ENCODE measurements at regions of chrX and their contacts with region 1.

Region 1: DNA sequence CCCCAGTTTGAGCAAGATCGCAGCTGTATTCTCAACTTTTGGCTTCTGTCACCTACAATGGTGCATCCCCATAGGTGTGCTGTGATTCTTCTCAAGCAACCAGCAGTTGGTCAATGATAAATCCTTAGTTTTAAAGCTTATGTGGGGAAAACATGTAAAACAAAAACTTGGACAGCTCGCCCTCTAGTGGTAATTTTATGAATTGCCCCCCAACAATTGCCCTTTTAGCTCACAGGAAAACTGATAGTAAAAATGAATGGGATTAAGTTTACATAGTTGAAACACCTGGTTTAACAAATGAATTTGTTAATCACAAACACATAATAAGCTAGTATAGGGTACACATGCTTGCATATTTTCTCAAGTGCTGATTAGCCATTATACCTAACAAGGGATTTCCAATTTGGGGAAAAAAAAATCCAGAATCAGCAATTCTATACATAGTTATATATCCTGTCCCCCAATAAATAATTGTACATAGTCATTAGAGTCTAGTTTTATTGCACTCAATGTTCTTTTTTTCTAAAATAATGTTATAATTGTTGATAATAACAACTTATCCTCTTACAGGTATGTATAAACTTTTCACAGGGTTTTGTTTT is 30.1 kb downstream of the TEX13A start:
- DNase-seq: peak; percentile 57
- H3K4me3 Mint-ChIP-seq: no peak overlapping the region
- H3K27ac Mint-ChIP-seq: no peak overlapping the region
- H3K4me1 Mint-ChIP-seq: no peaks in the 10 kb centered on the region
- H3K27me3 Mint-ChIP-seq: peaks cover 39% of the 10 kb centered on the region
- CTCF ChIP-seq: peak; percentile 74

Region 2: DNA sequence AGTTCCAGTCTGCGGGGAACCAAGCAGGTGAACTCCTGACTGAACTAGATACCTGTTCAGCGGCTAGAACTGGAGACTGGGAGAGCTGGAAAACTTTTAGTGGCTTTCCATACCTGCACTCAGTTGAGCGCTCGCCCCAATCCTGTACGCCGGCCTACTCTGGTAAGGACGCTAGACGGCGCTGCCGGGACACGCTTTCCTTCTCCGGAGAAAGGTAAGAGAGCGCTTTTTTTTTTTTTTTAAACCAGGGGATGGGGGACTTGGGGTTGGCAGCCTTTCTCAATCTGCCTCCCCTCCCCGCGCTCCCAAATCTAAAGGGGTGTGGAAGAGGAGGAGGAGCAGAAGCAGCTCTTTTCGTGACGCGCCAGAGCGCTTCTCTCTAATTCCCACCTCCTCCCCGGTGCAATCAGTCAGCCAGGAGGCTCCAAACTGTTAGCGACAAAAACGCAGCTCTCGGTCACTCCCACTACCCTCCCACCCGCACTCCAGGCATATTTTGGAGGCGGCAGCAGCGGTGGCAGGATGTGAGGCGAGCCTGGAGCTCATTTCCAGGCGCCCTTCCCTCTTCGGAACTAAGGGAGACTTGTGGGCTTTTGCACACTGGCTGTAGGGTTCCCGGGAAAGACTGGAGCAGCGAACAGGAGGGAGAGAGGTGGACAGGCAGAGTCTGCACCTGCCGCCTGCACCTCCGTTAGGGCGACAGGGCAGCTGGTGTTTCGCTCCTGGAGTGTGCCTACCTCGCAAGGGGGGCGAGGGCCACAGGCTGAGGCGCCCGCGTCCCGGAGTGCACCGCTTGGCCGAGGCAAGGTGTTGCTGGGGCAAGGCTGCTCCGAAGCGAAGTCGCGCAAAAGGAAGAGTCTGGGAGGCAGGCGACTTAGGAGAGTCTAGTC is 624.3 kb before region 1 on chrX and contains the start of gene IL1RAPL2:
- CTCF ChIA-PET with region 1: interaction called, 17 read pairs
- POLR2A ChIA-PET with region 1: interaction called, 3 read pairs
- intact Hi-C with region 1: loop called (anchors 2 kb)
- DNase-seq: peak; percentile 57
- H3K4me3 Mint-ChIP-seq: peak within 1 kb of the TSS; percentile 74
- H3K27ac Mint-ChIP-seq: no peak within 1 kb of the TSS
- H3K4me1 Mint-ChIP-seq: no peaks in the 10 kb centered on the region
- H3K27me3 Mint-ChIP-seq: peaks cover 36% of the 10 kb centered on the region
- CTCF ChIP-seq: peak; percentile 57
- total RNA-seq, gene IL1RAPL2: 3.2 and 4.4 TPM in 2 replicates

Region 3: GRCh38 chrX:104922206-104922621 is 268.1 kb before region 1 on chrX:
- CTCF ChIA-PET with region 1: interaction called, 21 read pairs
- POLR2A ChIA-PET with region 1: no interaction called
- intact Hi-C with region 1: loop called (anchors 5 kb)
- DNase-seq: peak; percentile 76
- H3K4me3 Mint-ChIP-seq: no peak overlapping the region
- H3K27ac Mint-ChIP-seq: no peak overlapping the region
- H3K4me1 Mint-ChIP-seq: no peaks in the 10 kb centered on the region
- H3K27me3 Mint-ChIP-seq: peaks cover 50% of the 10 kb centered on the region
- CTCF ChIP-seq: peak; percentile 97

Region 4: DNA sequence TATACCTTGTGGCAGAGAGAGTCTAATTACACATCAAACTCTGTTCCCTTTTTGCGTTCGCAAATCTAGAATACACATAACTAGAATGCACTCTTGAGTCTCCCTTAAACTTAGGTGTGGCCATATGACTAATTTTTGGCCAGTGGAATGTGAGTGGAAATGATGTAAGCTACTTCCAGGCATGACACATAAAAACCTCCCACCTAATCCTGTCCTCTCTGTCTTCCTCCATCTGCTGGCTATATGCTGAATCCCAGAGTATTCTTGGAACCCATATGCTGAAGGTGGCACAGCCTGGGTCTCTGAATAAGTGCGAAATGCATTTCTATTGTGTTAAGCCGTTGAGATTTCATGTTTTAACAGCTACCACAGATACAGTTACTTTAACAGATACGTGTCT is 362.0 kb after region 1 on chrX:
- CTCF ChIA-PET with region 1: interaction called, 3 read pairs
- POLR2A ChIA-PET with region 1: no interaction called
- intact Hi-C with region 1: loop called (anchors 10 kb)
- DNase-seq: peak; percentile 84
- H3K4me3 Mint-ChIP-seq: peak overlapping the region; percentile 8
- H3K27ac Mint-ChIP-seq: peak overlapping the region; percentile 63
- H3K4me1 Mint-ChIP-seq: peaks cover 8% of the 10 kb centered on the region
- H3K27me3 Mint-ChIP-seq: peaks cover 35% of the 10 kb centered on the region
- CTCF ChIP-seq: no peak

Measured in MCF 10A (cell line).